Activated CD4-positive, alpha-beta T cell treated with anti-CD3 and anti-CD28 coated beads for 36 hours (primary cell): ENCODE measurements at regions of chr16 and their contacts with region 1.

Region 1: DNA sequence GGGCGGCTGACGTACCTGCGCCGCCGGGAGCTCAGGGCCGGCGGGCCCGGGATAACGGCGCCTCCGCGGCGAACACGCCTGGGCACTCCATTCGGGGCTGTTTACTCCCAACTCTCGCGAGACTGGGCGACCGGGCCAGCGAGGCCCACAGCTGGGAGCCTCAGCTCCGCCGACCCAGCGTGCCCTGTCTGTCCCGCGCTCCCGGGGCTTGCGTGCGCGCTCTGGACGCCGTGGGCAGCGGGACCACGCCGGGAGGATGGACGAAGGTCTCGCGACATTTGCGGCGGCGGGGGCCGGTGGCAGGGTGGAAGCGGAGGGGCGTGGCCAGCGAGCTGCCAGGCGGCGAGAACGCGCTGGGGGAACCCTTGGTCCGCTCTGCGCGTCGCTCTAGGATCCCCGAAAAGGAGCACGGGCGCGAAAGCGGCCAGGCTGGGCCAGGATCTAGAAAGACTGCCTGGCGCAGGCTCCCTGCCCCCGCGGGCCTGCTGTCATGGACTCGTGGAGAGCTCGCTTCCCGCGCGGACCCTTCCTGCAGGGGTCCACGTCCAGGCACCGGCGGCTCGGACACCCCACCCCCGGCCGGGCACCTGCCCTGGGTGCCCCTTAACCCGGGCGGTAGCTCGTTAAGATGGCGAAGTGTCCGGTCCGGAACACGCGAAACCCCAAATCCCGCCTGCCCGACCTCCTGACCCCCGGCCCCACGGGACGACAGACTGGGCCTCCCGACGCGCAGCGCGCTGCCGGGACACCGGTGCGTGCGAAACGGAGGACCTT is at the start of gene MBTPS1:
- DNase-seq: peak; percentile 99
- ATAC-seq: peak; percentile 93
- H3K4me3 Mint-ChIP-seq: peak within 1 kb of the TSS; percentile 80
- H3K27ac Mint-ChIP-seq: peak within 1 kb of the TSS; percentile 95
- H3K4me1 Mint-ChIP-seq: peaks cover 31% of the 10 kb centered on the region
- H3K27me3 Mint-ChIP-seq: no peaks in the 10 kb centered on the region
- total RNA-seq, gene MBTPS1: 32.0 to 32.2 TPM

Region 2: DNA sequence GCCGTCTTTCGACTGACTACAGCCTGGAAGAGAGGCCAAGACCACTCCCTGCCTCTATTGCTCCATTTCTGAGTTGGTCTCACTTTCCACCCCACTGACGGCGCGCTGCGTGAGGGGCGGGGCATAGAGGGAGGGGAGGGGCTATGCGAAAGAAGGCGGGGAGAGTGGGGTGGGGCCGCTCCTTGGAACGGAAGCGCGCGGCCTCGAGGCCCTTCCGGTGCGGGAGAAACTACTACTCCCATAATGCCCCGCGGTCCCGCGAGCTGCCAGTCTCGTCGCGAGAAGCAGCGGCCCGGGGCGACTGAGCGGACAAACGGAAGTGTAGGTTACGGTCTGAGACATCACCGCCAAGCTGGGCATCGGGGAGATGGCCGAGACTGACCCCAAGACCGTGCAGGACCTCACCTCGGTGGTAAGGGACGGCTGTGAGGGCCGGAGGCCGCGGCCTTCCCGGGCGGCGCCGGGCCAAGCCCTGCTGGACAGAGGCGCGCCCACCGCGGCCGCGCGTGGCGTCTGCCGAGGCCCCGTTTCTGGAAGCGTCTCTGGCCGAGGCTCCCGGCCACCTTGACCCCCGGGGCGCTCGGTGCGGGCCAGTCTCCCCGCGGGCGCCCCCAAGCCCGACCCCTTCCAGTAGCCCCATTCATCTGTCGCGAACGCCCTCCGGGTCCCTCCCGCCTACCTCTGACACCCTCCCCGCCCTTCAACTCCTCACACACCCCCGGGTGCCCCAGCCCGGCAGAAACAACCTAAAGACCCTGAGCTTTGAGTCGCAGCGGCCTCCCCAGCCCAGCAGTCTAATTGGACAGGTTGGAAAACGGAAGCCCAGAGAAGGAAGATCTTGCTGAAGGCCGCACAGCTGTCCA is 309.0 kb before region 1 on chr16 and contains the start of gene HSBP1:
- CTCF ChIA-PET with region 1: no interaction called
- POLR2A ChIA-PET with region 1: no interaction called
- intact Hi-C with region 1: loop called in 1 of 2 experiments (anchors 1 kb)
- DNase-seq: peak; percentile 97
- ATAC-seq: peak; percentile 98
- H3K4me3 Mint-ChIP-seq: peak within 1 kb of the TSS; percentile 98
- H3K27ac Mint-ChIP-seq: peak within 1 kb of the TSS; percentile 93
- H3K4me1 Mint-ChIP-seq: peaks cover 31% of the 10 kb centered on the region
- H3K27me3 Mint-ChIP-seq: peaks cover under 1% of the 10 kb centered on the region
- total RNA-seq, gene HSBP1: 73.1 to 80.7 TPM

Region 3: DNA sequence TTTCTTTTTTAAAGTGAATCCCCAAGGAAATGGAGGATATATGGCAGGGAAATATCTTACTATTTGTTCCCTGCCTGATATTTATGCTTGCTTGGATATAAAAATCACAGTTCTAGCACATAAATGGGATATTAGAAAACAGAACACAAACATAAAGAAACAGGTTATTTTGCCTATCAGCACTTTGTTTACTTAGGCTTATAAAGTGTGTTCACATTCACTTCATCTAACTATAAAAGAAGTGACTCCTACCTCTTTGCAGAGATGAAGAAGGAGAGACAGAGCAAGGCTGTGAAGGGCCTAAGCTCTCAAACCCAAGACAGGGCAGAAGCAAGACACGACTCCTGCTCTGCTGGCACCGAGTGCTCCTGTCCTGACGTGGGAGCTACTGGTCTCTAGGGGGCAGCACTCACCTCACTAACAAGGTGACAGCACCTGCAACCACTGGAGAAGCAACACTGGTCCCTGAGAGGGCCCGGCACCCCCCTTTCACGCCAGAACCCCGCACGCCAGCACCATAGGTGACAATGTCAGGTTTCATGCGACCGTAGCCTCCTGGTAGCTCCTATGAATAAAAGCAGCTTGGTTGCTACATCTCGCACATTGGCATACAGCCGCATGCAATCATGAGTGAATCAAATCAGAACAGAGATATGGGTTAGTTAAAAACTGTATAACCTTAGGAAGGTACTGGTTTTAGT is 32.2 kb before region 1 on chr16:
- CTCF ChIA-PET with region 1: interaction called, 31 read pairs
- POLR2A ChIA-PET with region 1: interaction called, 5 read pairs
- intact Hi-C with region 1: loop called in 1 of 2 experiments (anchors 2 kb)
- DNase-seq: peak; percentile 83
- ATAC-seq: peak; percentile 79
- H3K4me3 Mint-ChIP-seq: no peak overlapping the region
- H3K27ac Mint-ChIP-seq: no peak overlapping the region
- H3K4me1 Mint-ChIP-seq: peaks cover 40% of the 10 kb centered on the region
- H3K27me3 Mint-ChIP-seq: no peaks in the 10 kb centered on the region

Region 4: GRCh38 chr16:84144859-84145639 is 28.1 kb after region 1 on chr16 and contains the starts of genes DNAAF1 and HSDL1:
- CTCF ChIA-PET with region 1: interaction called, 6 read pairs
- POLR2A ChIA-PET with region 1: interaction called, 11 read pairs
- intact Hi-C with region 1: loop called (anchors 1 kb)
- DNase-seq: peak; percentile 96
- ATAC-seq: peak; percentile 84
- H3K4me3 Mint-ChIP-seq: peak within 1 kb of the TSS; percentile 95
- H3K27ac Mint-ChIP-seq: peak within 1 kb of the TSS; percentile 72
- H3K4me1 Mint-ChIP-seq: peaks cover 12% of the 10 kb centered on the region
- H3K27me3 Mint-ChIP-seq: peaks cover 4% of the 10 kb centered on the region
- total RNA-seq, gene DNAAF1: 0.39 TPM in 1 of 2 experiments, not detected in the other
- total RNA-seq, gene HSDL1: 7.4 to 11.4 TPM

Region 5: DNA sequence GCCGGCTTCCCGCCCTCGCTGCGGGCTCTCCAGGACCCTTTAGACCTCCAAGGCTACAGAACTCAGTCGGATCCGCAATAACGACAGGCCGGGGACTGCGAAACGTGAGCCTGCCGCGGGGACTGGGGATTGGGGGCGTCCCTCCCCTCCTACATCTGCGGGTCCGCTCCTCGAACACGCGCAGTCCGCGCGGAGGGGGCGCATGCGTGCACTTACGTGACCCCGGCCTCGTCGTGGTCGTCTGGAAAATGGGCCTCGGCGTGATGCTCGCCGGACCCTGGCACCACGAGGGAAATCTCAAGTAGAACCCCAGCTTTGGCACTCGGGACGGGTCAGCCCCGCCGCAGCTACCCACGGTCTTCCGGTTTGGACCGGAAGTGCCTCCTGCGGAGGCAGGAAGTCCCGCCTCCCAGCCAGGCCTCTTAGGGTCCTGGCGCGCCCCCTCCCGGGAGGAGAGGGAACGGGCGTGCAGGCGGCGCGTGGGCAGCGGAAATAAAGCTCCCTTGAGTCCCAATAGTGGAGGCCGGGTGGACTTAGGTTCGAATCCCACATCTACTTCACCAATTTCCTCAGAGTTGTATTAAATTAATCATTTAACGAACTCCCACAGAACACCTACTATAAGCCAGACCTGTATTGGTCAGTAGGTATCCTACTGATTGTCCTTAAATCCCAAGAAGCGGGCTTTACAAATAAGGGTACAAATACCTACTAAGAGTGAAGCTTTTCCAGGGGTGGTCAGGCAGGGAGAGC is 70.0 kb after region 1 on chr16 and contains the start of gene TAF1C:
- CTCF ChIA-PET with region 1: interaction called, 9 read pairs
- POLR2A ChIA-PET with region 1: no interaction called
- intact Hi-C with region 1: loop called (anchors 1 to 5 kb)
- DNase-seq: peak; percentile 95
- ATAC-seq: peak; percentile 96
- H3K4me3 Mint-ChIP-seq: peak within 1 kb of the TSS; percentile 94
- H3K27ac Mint-ChIP-seq: peak within 1 kb of the TSS; percentile 94
- H3K4me1 Mint-ChIP-seq: peaks cover 16% of the 10 kb centered on the region
- H3K27me3 Mint-ChIP-seq: no peaks in the 10 kb centered on the region
- total RNA-seq, gene TAF1C: 44.4 to 45.7 TPM

Region 6: DNA sequence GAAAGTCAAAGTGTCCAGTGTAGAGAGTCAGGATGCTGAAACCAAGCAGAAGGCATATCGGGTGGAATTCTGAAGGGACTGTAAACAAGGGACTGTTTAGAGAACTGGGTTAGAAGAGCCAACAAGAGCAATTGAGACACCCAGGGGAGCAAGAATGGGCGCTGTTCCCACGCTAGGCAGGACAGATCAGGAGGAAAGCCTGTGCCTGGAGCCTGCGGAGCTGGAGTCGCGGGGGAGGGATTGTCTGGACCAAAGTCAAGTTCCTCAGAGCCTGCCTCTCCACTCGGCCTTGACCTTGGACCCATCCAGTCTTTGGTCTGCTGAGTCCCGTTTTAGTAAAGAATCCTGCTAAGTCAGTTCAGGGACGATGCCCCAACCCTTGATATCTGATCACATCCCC is 516.7 kb after region 1 on chr16:
- CTCF ChIA-PET with region 1: no interaction called
- POLR2A ChIA-PET with region 1: no interaction called
- intact Hi-C with region 1: no loop called
- DNase-seq: no peak
- ATAC-seq: no peak
- H3K4me3 Mint-ChIP-seq: no peak overlapping the region
- H3K27ac Mint-ChIP-seq: no peak overlapping the region
- H3K4me1 Mint-ChIP-seq: peaks cover 38% of the 10 kb centered on the region
- H3K27me3 Mint-ChIP-seq: no peaks in the 10 kb centered on the region